Esophagus muscularis mucosa (tissue), 4 donors: ENCODE measurements at regions of chr12 and their contacts with region 1.

Region 1: GRCh38 chr12:108950991-108951739 is 69.7 kb downstream of the SVOP start:
- DNase-seq: peak; percentile 97
- H3K4me3 ChIP-seq: peak overlapping the region in 3 of 4 donors; percentile 6 to 38 (median 26)
- H3K27ac ChIP-seq: no peak overlapping the region
- H3K4me1 ChIP-seq: peaks cover 8 to 14% (median 9%) of the 10 kb centered on the region in 4 donors
- H3K27me3 ChIP-seq: peaks cover 0 to 6% (median 0%) of the 10 kb centered on the region in 4 donors
- CTCF ChIP-seq: peak; percentile 85 to 90 (median 89)
- EP300 ChIP-seq: no peak
- POLR2A ChIP-seq: no peak

Region 2: DNA sequence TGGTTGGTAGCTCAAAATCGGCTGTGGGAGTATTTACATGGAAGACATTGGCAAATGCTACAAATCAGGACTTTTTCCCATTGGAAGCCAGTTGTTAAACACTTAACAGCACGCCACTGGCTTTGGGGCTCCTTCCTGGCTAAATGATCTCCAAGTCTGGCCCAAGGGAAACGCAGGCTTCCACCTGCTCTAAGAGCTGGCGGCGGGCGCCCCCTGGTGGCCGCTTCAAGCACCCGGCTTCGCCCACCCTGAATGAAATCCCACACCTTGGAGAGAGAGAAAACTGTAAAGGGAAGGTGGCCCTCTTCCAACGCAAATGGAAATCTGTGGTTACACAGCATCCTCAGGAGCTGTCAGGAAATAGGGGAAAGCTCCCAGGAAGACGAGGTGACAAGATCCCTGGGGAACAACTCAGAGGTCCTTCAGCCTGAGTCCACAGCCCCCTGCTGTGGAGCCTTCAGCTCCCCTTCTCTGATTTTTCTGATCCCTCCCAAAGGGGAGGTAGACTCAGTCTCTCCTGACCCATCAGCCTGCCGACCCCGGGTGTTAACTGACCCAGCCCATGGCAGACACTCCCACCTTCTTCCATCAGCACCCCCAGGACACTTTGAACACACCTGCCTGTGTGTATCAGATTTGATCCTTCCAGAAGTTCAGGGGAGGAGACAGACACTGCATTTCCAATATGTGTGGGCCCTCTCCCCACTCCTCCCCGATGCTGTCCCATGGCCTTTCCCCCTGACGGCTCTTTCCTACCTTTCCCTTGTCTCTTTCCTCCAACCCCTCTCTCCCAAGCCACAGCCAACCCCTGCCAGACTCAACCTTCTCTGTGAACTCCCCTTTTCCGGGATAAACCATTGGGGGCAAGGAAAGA is 332.8 kb before region 1 on chr12:
- intact Hi-C with region 1: loop called (anchors 5 kb)
- DNase-seq: no peak
- H3K4me3 ChIP-seq: no peak overlapping the region
- H3K27ac ChIP-seq: no peak overlapping the region
- H3K4me1 ChIP-seq: peaks cover 11 to 27% (median 14%) of the 10 kb centered on the region in 4 donors
- H3K27me3 ChIP-seq: no peaks in the 10 kb centered on the region
- CTCF ChIP-seq: peak; percentile 87 to 99 (median 95)
- EP300 ChIP-seq: no peak
- POLR2A ChIP-seq: no peak

Region 3: GRCh38 chr12:108744021-108744897 is 206.9 kb before region 1 on chr12:
- intact Hi-C with region 1: loop called (anchors 10 kb)
- DNase-seq: no peak
- H3K4me3 ChIP-seq: no peak overlapping the region
- H3K27ac ChIP-seq: no peak overlapping the region
- H3K4me1 ChIP-seq: peaks cover 0 to 7% (median 3%) of the 10 kb centered on the region in 4 donors
- H3K27me3 ChIP-seq: no peaks in the 10 kb centered on the region
- CTCF ChIP-seq: no peak
- EP300 ChIP-seq: no peak
- POLR2A ChIP-seq: no peak

Region 4: DNA sequence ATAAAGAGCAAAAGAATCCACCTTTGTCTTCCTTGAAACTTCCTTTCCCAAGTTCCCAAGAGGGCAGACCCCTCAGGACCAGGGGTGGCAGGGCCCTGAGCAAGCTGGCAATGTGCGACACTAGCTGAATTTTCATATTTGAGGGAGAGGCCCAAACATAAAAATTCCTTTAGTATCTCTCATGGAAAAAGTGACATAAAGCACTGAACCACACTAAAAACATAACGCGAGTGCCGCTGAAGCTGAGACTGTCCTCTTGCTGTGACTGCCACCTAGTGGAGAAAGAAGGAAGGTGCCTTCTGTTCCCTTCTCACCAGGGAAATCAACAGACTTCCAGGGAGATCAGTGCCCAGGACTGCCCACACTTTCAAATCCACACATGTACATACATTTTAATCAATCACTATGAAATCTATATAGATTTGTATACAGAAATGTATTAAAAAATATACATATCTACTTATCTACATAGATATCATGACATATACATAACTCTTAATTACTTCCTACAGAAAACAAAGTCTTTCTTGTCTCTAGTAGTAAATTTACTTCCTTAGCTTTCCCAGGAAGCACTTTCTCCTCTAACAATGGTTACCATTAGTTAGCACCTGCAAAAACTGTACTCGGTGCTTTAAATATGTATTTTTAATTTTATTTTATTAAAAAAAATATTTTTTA is 147.6 kb before region 1 on chr12:
- intact Hi-C with region 1: loop called (anchors 10 kb)
- DNase-seq: peak; percentile 96
- H3K4me3 ChIP-seq: peak overlapping the region in 1 of 4 donors; percentile 39
- H3K27ac ChIP-seq: peak overlapping the region; percentile 90 to 95 (median 94)
- H3K4me1 ChIP-seq: peaks cover 69 to 87% (median 83%) of the 10 kb centered on the region in 4 donors
- H3K27me3 ChIP-seq: no peaks in the 10 kb centered on the region
- CTCF ChIP-seq: peak; percentile 96 to 99 (median 98)
- EP300 ChIP-seq: no peak
- POLR2A ChIP-seq: no peak

Region 5: DNA sequence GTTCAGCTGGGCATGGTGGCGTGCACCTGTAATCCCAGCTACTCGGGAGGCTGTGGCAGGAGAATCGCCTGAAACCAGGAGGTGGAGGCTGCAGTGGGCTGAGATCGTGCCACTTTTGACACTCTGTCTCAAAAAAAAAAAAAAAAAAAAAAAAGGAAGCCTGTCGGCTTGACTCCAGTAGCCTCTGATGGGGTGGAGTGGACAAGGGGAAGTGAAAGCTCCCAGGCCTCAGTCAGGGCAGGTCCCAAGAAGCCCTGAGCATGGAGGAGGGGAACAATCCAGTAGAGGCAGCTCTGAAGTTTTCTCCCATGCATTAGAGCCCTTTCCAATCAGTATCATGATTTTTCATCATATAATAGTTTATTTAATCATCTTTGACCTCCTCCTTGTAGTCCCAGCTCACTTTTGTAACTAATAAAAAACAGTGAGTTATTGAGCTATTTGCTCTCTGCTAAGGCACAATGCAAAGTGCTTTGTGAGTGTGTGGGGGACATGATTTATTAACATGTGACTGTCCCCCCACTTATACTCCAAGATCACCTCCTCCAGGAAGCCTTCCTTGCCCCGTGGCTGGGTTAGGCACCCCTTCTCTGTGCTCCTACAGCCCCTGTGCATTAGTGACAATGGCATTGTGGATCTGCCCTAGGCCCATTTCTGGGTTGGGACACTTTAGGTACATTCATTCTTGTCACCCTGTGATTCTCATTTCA is 89.1 kb before region 1 on chr12:
- intact Hi-C with region 1: loop called (anchors 10 kb)
- DNase-seq: no peak
- H3K4me3 ChIP-seq: no peak overlapping the region
- H3K27ac ChIP-seq: no peak overlapping the region
- H3K4me1 ChIP-seq: peaks cover 12 to 19% (median 19%) of the 10 kb centered on the region in 4 donors
- H3K27me3 ChIP-seq: no peaks in the 10 kb centered on the region
- CTCF ChIP-seq: no peak
- EP300 ChIP-seq: no peak
- POLR2A ChIP-seq: no peak

Region 6: DNA sequence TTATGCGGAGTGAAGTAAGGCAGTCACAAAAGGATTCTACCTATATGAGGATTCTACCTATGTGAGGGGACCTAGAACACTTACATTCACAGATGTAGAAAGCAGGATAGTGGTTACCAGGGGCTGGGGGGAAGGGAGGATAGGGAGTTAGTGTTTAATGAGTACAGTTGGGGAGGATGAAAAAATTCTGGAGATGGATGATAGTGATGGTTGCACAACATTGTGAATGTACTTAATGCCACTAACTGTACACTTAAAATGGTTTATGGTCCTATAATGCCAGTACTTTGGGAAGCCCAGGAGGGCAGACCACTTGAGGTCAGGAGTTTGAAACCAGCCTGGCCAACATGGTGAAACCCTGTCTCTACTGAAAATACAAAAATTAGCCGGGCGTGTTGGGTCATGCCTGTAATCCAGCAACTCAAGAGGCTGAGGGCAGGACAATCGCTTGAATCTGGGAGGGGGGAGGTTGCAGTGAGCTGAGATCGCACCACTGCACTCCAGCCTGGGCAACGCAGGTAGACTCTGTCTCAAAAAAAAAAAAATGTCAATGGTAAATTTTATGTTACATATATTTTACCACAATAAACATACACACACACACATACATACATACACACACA is 44.3 kb after region 1 on chr12:
- intact Hi-C with region 1: no loop called
- DNase-seq: no peak
- H3K4me3 ChIP-seq: no peak overlapping the region
- H3K27ac ChIP-seq: no peak overlapping the region
- H3K4me1 ChIP-seq: no peaks in the 10 kb centered on the region
- H3K27me3 ChIP-seq: peaks cover 0 to 16% (median 0%) of the 10 kb centered on the region in 4 donors
- CTCF ChIP-seq: no peak
- EP300 ChIP-seq: no peak
- POLR2A ChIP-seq: no peak

Region 7: GRCh38 chr12:109811624-109811995 is 860.4 kb after region 1 on chr12:
- intact Hi-C with region 1: no loop called
- DNase-seq: no peak
- H3K4me3 ChIP-seq: no peak overlapping the region
- H3K27ac ChIP-seq: no peak overlapping the region
- H3K4me1 ChIP-seq: no peaks in the 10 kb centered on the region
- H3K27me3 ChIP-seq: peaks cover 0 to 29% (median 0%) of the 10 kb centered on the region in 4 donors
- CTCF ChIP-seq: no peak
- EP300 ChIP-seq: no peak
- POLR2A ChIP-seq: no peak